ENCODE measurements at regions of chr16 and their contacts with region 1.

Region 1: DNA sequence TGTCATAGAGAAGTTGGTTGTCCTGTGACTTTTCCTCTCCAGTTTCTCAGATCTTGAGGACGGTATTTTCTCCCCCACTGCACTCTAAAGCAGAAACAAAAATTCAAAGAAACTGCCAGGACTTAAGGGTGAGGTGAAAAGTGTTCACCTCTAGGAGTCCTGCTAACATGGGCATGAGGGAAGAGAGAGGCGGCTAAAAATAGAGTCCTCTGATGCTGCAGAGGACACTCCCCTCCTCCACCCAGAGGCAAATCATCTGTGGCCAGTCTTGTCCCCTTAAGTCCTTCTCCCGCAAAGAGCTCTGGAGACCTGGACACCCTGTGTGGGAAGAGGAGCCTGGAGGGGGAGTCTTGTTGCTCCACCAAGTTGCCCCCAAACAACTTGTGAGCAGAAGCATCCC is 4.7 kb upstream of the DDX19A start:
- DNase-seq: no peak
- H3K4me3 ChIP-seq: no peak overlapping the region
- H3K27ac ChIP-seq: no peak overlapping the region; the same call in 1 of the 2 replicates
- H3K4me1 ChIP-seq: no peaks in the 10 kb centered on the region; a peak in 1 of 7 replicates
- H3K27me3 ChIP-seq: no peaks in the 10 kb centered on the region
- CTCF ChIP-seq: no peak
- EP300 ChIP-seq: no peak
- POLR2A ChIP-seq: no peak
- RAD21 ChIP-seq: no peak

Region 2: DNA sequence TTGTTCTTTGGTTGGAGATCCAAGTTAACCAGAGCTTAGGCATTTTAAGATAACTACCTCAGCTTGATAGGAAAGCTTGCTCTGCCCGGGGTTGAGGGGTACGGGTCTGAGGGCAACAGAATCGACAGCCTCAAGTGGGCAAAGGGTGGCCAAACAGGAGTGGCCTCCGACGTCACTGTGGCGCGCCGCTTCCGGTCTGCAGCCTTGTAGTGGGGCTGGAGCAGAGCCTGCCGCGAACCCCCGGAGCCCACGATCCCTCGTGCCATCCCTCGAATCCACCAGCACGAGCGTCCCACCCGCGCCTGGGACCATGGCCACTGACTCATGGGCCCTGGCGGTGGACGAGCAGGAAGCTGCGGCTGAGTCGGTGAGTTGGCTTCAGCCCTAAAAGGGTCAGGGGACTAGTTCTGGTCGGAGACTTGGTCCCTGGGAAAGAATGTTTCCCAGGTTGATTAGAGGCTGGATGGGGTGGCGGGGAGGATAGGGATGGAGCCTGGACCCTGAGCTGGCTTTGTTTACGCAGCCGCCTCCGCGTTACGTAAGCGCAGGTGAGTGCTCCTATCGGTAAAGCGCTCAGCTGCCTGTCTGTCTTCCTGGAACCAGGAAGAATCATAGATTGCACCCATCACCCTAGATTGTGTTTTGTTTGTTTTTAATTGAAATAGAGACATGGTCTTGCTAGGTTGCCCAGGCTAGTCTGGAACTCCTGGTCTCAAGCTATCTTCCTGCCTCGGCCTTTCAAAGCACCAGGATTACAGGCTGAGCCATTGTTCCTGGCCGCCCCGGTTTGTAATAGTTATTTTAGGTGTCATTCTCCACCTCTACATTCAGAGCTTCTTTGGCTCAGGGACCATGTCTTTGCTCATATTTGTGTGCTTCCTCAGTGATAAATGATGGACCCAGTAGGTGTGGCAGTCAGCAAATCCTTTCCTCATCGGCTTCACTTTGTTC is 42.8 kb before region 1 on chr16 and contains the start of gene DDX19B:
- CTCF ChIA-PET with region 1: interaction called, 3 read pairs
- POLR2A ChIA-PET with region 1: interaction called, 25 read pairs
- DNase-seq: peak in 1 of 2 experiments; percentile 84
- H3K4me3 ChIP-seq: peak within 1 kb of the TSS; percentile 89 to 98 (median 98)
- H3K27ac ChIP-seq: peak within 1 kb of the TSS; percentile 93
- H3K4me1 ChIP-seq: peaks cover 0 to 3% (median 1%) of the 10 kb centered on the region in 4 experiments; a peak in 3 of 7 replicates
- H3K27me3 ChIP-seq: no peaks in the 10 kb centered on the region
- CTCF ChIP-seq: peak in 1 of 3 experiments; percentile 0; a peak in 1 of 4 replicates
- EP300 ChIP-seq: no peak
- POLR2A ChIP-seq: peak in 1 of 2 experiments; percentile 94; a peak in 2 of 3 replicates
- RAD21 ChIP-seq: no peak
- total RNA-seq, gene DDX19B: 42.7 and 46.6 TPM in 2 replicates

Region 3: GRCh38 chr16:70331588-70332358 is 10.2 kb before region 1 on chr16:
- CTCF ChIA-PET with region 1: interaction called, 24 read pairs
- POLR2A ChIA-PET with region 1: interaction called, 18 read pairs
- DNase-seq: no peak
- H3K4me3 ChIP-seq: no peak overlapping the region
- H3K27ac ChIP-seq: no peak overlapping the region
- H3K4me1 ChIP-seq: no peaks in the 10 kb centered on the region
- H3K27me3 ChIP-seq: no peaks in the 10 kb centered on the region
- CTCF ChIP-seq: peak; percentile 24 to 47 (median 39)
- EP300 ChIP-seq: no peak
- POLR2A ChIP-seq: no peak
- RAD21 ChIP-seq: peak; percentile 22 to 38; a peak in 3 of 4 replicates

Measured in H1 (cell line).